A549 (cell line): ENCODE measurements at regions of chr12 and their contacts with region 1.

Region 1: GRCh38 chr12:121005346-121005815 is 10.9 kb downstream of the C12orf43 start:
- DNase-seq: peak in 1 of 2 experiments; percentile 79
- ATAC-seq: peak; percentile 55 to 70; a peak in 4 of 6 replicates
- H3K4me3 ChIP-seq: no peak overlapping the region
- H3K27ac ChIP-seq: no peak overlapping the region
- H3K4me1 ChIP-seq: peaks cover 4% of the 10 kb centered on the region; the same call in 2 of the 3 replicates
- CTCF ChIP-seq: peak; percentile 68
- EP300 ChIP-seq: no peak
- POLR2A ChIP-seq: no peak
- RAD21 ChIP-seq: peak; percentile 56 to 62

Region 2: GRCh38 chr12:120955232-120955631 is 50.1 kb before region 1 on chr12:
- CTCF ChIA-PET with region 1: interaction called, 10 read pairs
- POLR2A ChIA-PET with region 1: no interaction called
- DNase-seq: no peak
- ATAC-seq: peak in 1 of 2 experiments; percentile 20; a peak in 3 of 6 replicates
- H3K4me3 ChIP-seq: no peak overlapping the region
- H3K27ac ChIP-seq: no peak overlapping the region
- H3K4me1 ChIP-seq: peaks cover 14% of the 10 kb centered on the region
- CTCF ChIP-seq: no peak
- EP300 ChIP-seq: no peak
- POLR2A ChIP-seq: no peak
- RAD21 ChIP-seq: no peak

Region 3: DNA sequence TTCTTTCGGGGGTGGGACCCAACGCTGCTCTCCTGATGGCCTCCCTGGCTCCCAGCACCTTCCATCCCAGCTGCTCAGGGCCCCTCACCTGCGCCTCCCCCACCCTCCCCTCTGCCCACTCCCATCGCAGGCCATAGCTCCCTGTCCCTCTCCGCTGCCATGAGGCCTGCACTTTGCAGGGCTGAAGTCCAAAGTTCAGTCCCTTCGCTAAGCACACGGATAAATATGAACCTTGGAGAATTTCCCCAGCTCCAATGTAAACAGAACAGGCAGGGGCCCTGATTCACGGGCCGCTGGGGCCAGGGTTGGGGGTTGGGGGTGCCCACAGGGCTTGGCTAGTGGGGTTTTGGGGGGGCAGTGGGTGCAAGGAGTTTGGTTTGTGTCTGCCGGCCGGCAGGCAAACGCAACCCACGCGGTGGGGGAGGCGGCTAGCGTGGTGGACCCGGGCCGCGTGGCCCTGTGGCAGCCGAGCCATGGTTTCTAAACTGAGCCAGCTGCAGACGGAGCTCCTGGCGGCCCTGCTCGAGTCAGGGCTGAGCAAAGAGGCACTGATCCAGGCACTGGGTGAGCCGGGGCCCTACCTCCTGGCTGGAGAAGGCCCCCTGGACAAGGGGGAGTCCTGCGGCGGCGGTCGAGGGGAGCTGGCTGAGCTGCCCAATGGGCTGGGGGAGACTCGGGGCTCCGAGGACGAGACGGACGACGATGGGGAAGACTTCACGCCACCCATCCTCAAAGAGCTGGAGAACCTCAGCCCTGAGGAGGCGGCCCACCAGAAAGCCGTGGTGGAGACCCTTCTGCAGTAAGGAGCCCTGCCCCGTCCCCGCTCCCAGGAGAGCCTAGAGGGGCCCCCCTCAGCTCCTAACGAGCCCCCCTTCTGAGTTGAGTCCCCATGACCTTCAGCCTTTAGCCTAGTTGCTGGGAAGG is 26.8 kb before region 1 on chr12 and contains the start of gene HNF1A:
- CTCF ChIA-PET with region 1: interaction called, 69 read pairs
- POLR2A ChIA-PET with region 1: no interaction called
- DNase-seq: peak in 1 of 2 experiments; percentile 67
- ATAC-seq: peak; percentile 25 to 57; a peak in 5 of 6 replicates
- H3K4me3 ChIP-seq: peak within 1 kb of the TSS; percentile 57
- H3K27ac ChIP-seq: peak within 1 kb of the TSS; percentile 96 to 98
- H3K4me1 ChIP-seq: peaks cover 62% of the 10 kb centered on the region
- CTCF ChIP-seq: no peak
- EP300 ChIP-seq: 0 out of 5 replicates have a peak, but pooled peaks of 1 of the 2 experiments have one; percentile 14
- POLR2A ChIP-seq: peak; percentile 18; the same call in 1 of the 2 replicates
- RAD21 ChIP-seq: 0 out of 5 replicates have a peak, but pooled peaks of 1 of the 2 experiments have one; percentile 18
- polyA plus RNA-seq, gene HNF1A: 2.6 and 4.0 TPM in 2 replicates

Region 4: GRCh38 chr12:121015825-121016766 is 10.7 kb after region 1 on chr12 and contains the start of gene C12orf43:
- CTCF ChIA-PET with region 1: interaction called, 18 read pairs
- POLR2A ChIA-PET with region 1: no interaction called
- DNase-seq: peak; percentile 92 to 94
- ATAC-seq: peak; percentile 91 to 98
- H3K4me3 ChIP-seq: peak within 1 kb of the TSS; percentile 64
- H3K27ac ChIP-seq: peak within 1 kb of the TSS; percentile 71 to 85
- H3K4me1 ChIP-seq: peaks cover 8% of the 10 kb centered on the region
- CTCF ChIP-seq: no peak
- EP300 ChIP-seq: no peak
- POLR2A ChIP-seq: peak; percentile 76
- RAD21 ChIP-seq: no peak
- polyA plus RNA-seq, gene C12orf43: 19.2 and 20.5 TPM in 2 replicates

Region 5: DNA sequence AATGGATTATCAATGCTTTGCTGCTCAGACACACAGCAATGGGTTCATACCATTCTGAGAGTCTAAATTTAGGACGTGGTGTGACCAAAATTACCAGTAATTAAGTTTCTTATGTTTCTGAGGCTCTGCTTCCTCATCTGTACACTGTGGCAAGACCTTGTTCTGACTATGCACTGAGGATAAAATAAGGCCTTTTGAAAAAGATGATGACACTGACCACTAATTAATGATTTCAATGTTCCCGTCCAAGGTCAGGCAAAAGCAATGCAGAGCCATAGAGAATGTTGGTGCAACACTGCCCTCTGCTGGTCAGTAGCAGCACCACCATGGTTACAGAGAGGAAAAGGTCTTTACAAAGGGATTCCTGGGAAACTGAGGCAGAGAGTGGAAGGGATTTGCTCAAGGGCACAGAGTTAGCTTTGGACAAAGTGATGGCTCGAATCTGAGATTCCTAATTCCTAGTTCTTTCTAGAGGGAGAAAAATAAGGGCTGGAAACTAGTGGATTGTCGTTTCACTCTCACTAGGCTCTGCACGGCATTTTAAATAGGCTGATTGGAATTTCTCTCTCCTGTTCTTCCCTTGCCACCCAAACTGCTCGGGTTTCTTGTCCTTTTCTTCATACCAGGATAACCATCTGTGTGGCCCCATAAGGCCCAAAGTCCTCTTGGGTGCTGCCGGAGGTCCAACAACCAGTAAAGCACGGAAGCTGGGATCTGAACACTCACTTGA is 105.0 kb after region 1 on chr12:
- CTCF ChIA-PET with region 1: interaction called, 12 read pairs
- POLR2A ChIA-PET with region 1: no interaction called
- DNase-seq: peak; percentile 54 to 74
- ATAC-seq: peak; percentile 72 to 88; a peak in 4 of 6 replicates
- H3K4me3 ChIP-seq: no peak overlapping the region
- H3K27ac ChIP-seq: no peak overlapping the region
- H3K4me1 ChIP-seq: no peaks in the 10 kb centered on the region
- CTCF ChIP-seq: peak; percentile 97
- EP300 ChIP-seq: no peak
- POLR2A ChIP-seq: no peak
- RAD21 ChIP-seq: peak; percentile 89 to 95

Region 6: DNA sequence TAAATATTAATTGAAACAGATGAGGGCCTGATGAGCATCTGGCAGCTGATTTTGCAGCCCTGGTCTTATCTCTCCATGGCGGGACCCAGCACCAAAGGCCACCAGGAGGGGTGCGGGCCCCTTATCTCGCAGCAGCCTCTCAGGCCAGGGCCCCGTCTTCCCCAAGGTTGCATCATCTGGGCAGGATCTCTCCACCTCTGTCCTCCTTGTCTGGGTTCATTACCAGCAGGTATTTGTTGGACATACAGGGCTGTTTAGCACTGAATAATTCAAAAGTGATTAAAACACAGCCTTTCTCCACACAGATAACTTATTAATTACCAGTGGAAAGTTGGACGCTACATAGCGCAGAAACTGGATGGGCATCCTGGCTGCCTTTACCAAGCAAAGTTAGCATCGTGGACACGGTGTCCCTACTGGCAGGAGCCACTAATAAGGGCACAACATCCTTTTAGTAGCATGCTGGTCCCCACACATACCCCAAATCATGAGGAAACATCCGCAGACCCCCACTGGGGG is 733.0 kb after region 1 on chr12:
- CTCF ChIA-PET with region 1: no interaction called
- POLR2A ChIA-PET with region 1: no interaction called
- DNase-seq: no peak
- ATAC-seq: no peak
- H3K4me3 ChIP-seq: no peak overlapping the region
- H3K27ac ChIP-seq: peak overlapping the region in 1 of 2 experiments; percentile 59; a peak in 1 of 6 replicates
- H3K4me1 ChIP-seq: peaks cover 25% of the 10 kb centered on the region
- CTCF ChIP-seq: no peak
- EP300 ChIP-seq: no peak
- POLR2A ChIP-seq: no peak
- RAD21 ChIP-seq: no peak